ENCODE measurements at regions of chr21 and their contacts with region 1.

Region 1: DNA sequence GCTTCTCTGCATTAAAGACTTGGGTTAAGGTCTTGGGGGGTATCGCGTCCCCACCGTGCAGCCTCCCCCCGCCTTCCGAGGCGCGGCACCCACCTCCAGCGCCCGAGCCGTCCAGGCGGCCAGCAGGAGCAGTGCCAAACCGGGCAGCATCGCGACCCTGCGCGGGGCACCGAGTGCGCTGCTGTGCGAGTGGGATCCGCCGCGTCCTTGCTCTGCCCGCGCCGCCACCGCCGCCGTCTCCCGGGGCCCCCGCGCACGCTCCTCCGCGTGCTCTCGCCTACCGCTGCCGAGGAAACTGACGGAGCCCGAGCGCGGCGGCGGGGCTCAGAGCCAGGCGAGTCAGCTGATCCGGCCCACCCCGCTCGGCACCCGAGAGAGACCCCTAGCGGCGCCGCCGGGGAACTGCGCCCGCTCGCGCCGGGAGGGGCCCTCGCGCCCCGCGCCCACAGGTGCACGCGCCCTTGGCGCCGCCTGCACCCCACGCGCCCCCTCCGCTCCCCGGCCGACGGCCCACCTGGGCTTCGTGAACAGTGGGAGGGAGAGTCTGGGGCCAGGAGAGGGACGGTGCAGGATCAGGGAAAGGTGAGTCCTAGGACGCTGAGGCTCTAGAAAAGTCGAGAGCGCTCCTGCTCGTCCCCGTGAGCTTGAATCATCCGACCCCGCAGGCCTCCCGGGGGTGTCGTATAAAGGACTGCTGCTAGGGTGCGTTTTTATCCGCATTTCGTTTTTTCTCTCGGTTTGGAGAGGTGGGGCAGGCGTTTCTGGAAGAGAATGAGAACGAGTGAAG is at the start of gene APP:
- DNase-seq: peak; percentile 87
- ATAC-seq: peak; percentile 87
- H3K4me3 Mint-ChIP-seq: peak within 1 kb of the TSS; percentile 80
- H3K27ac Mint-ChIP-seq: peak within 1 kb of the TSS; percentile 69
- H3K4me1 Mint-ChIP-seq: peaks cover 16% of the 10 kb centered on the region
- H3K27me3 Mint-ChIP-seq: peaks cover 12% of the 10 kb centered on the region
- total RNA-seq, gene APP: 14.5 to 14.9 TPM

Region 2: GRCh38 chr21:25734904-25735645 is 435.6 kb before region 1 on chr21 and contains the starts of genes ATP5PF and GABPA:
- CTCF ChIA-PET with region 1: no interaction called
- POLR2A ChIA-PET with region 1: no interaction called
- DNase-seq: peak; percentile 98
- ATAC-seq: peak; percentile 93
- H3K4me3 Mint-ChIP-seq: peak within 1 kb of the TSS; percentile 99
- H3K27ac Mint-ChIP-seq: peak within 1 kb of the TSS; percentile 100
- H3K4me1 Mint-ChIP-seq: peaks cover 29% of the 10 kb centered on the region
- H3K27me3 Mint-ChIP-seq: no peaks in the 10 kb centered on the region
- total RNA-seq, gene ATP5PF: 148 to 150 TPM
- total RNA-seq, gene GABPA: 21.3 to 26.9 TPM

Region 3: GRCh38 chr21:25895565-25896205 is 275.0 kb before region 1 on chr21:
- CTCF ChIA-PET with region 1: interaction called, 40 read pairs
- POLR2A ChIA-PET with region 1: no interaction called
- DNase-seq: peak; percentile 22
- ATAC-seq: no peak
- H3K4me3 Mint-ChIP-seq: no peak overlapping the region
- H3K27ac Mint-ChIP-seq: no peak overlapping the region
- H3K4me1 Mint-ChIP-seq: peaks cover 16% of the 10 kb centered on the region
- H3K27me3 Mint-ChIP-seq: no peaks in the 10 kb centered on the region

Region 4: DNA sequence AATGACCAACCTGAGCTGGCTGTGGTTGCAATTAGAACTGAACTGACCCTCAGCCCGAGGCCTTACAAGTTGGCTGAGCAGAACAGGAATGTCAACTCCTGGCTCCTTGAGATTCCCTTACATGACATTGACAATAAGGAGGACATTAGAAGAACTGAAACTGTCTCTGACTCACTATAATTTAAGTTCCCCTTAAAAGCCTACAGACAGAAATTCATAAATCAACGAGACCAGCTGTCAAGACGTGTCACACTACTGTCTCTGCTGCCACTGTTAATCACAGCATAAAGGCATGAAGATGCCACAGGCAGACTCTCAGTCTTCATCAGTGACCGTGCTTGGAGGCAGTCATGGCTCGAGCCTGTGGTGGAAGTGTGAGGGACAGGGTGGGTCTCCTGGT is 267.1 kb before region 1 on chr21:
- CTCF ChIA-PET with region 1: interaction called, 13 read pairs
- POLR2A ChIA-PET with region 1: no interaction called
- DNase-seq: no peak
- ATAC-seq: no peak
- H3K4me3 Mint-ChIP-seq: no peak overlapping the region
- H3K27ac Mint-ChIP-seq: no peak overlapping the region
- H3K4me1 Mint-ChIP-seq: no peaks in the 10 kb centered on the region
- H3K27me3 Mint-ChIP-seq: no peaks in the 10 kb centered on the region

Region 5: DNA sequence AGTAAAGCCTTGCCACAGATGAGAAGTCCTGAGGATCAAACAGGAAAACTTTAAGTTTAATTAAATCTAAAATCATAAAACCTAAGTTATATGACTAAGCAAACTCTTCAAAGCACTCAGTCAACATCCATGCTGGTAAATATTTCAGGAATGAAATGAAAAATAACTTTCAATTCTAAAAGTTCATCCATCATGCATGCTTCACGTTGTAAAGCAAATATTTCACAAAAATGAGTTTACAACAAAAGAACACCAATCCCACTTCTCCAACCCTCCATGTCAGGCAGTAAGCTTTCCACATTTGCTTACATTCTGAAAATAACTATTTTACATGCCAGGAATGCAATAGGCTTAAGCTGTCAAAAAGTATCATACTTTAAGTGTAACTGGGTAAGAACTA is 16.9 kb before region 1 on chr21:
- CTCF ChIA-PET with region 1: interaction called, 22 read pairs
- POLR2A ChIA-PET with region 1: no interaction called
- DNase-seq: no peak
- ATAC-seq: no peak
- H3K4me3 Mint-ChIP-seq: no peak overlapping the region
- H3K27ac Mint-ChIP-seq: no peak overlapping the region
- H3K4me1 Mint-ChIP-seq: peaks cover 10% of the 10 kb centered on the region
- H3K27me3 Mint-ChIP-seq: no peaks in the 10 kb centered on the region

Region 6: GRCh38 chr21:26199456-26199855 is 28.8 kb after region 1 on chr21:
- CTCF ChIA-PET with region 1: no interaction called
- POLR2A ChIA-PET with region 1: no interaction called
- DNase-seq: no peak
- ATAC-seq: no peak
- H3K4me3 Mint-ChIP-seq: no peak overlapping the region
- H3K27ac Mint-ChIP-seq: no peak overlapping the region
- H3K4me1 Mint-ChIP-seq: no peaks in the 10 kb centered on the region
- H3K27me3 Mint-ChIP-seq: no peaks in the 10 kb centered on the region